PC-9 (cell line): ENCODE measurements at regions of chr5 and their contacts with region 1.

Region 1: DNA sequence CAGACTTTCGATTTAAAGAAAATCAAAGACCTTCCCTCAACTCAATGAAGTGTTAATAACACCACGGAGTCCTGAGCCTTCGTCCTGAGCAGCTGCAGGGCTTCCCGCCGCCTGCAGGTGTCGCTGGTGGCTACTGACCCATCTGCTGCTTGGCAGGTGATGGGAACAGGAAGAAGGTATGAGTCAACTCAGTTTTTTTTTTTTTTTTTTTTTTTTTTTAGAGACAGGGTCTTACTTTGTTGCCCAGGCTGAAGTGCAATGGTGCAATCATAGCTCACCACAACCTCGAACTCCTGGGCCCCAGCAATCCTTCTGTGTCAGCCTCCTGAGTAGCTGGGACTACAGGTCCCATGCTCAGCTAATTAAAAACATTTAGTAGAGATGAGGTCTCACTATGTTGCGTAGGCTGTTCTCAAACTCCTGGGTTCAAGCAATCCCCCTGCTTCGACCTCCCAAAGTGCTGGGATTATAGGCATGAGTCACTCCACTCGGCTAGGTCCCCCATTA is 185.7 kb upstream of the IL12B start:
- DNase-seq: peak; percentile 58 to 76
- H3K4me3 ChIP-seq: no peak overlapping the region
- H3K27ac ChIP-seq: no peak overlapping the region
- H3K4me1 ChIP-seq: peaks cover 45% of the 10 kb centered on the region
- H3K27me3 ChIP-seq: no peaks in the 10 kb centered on the region
- CTCF ChIP-seq: peak; percentile 72

Region 2: GRCh38 chr5:158464383-158464782 is 1051.6 kb before region 1 on chr5:
- CTCF ChIA-PET with region 1: no interaction called
- POLR2A ChIA-PET with region 1: no interaction called
- intact Hi-C with region 1: no loop called
- DNase-seq: no peak
- H3K4me3 ChIP-seq: no peak overlapping the region
- H3K27ac ChIP-seq: no peak overlapping the region
- H3K4me1 ChIP-seq: no peaks in the 10 kb centered on the region
- H3K27me3 ChIP-seq: no peaks in the 10 kb centered on the region
- CTCF ChIP-seq: no peak

Region 3: GRCh38 chr5:159100025-159100781 is 415.8 kb before region 1 on chr5:
- CTCF ChIA-PET with region 1: no interaction called
- POLR2A ChIA-PET with region 1: no interaction called
- intact Hi-C with region 1: no loop called
- DNase-seq: no peak
- H3K4me3 ChIP-seq: no peak overlapping the region
- H3K27ac ChIP-seq: no peak overlapping the region
- H3K4me1 ChIP-seq: no peaks in the 10 kb centered on the region
- H3K27me3 ChIP-seq: peaks cover 30% of the 10 kb centered on the region; the same call in 1 of the 2 replicates
- CTCF ChIP-seq: no peak

Region 4: DNA sequence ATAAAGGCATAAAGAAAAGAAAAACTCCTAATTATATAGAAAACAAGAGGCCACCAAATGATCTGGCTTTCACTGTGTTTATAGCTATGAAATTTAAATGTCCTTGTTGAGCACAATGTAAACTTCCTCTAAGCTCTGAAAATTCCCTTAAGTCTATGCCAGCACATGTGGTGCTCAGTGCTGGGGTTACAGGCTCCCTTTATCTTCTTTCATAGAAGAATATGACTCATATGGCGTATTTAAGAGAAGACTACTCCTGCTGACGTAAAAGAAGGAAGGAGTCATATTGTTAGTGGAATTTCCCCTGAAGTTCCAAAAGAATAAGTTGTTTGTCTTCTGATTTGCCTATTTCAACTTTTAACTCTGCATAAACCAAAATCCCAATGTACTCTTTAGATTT is 337.0 kb before region 1 on chr5:
- CTCF ChIA-PET with region 1: no interaction called
- POLR2A ChIA-PET with region 1: no interaction called
- intact Hi-C with region 1: loop called (anchors 10 kb)
- DNase-seq: peak; percentile 31 to 68
- H3K4me3 ChIP-seq: no peak overlapping the region
- H3K27ac ChIP-seq: peak overlapping the region; percentile 38
- H3K4me1 ChIP-seq: peaks cover 37% of the 10 kb centered on the region
- H3K27me3 ChIP-seq: no peaks in the 10 kb centered on the region
- CTCF ChIP-seq: no peak

Region 5: GRCh38 chr5:159341914-159342313 is 174.0 kb before region 1 on chr5:
- CTCF ChIA-PET with region 1: no interaction called
- POLR2A ChIA-PET with region 1: no interaction called
- intact Hi-C with region 1: loop called (anchors 5 kb)
- DNase-seq: peak; percentile 83 to 88
- H3K4me3 ChIP-seq: no peak overlapping the region
- H3K27ac ChIP-seq: no peak overlapping the region
- H3K4me1 ChIP-seq: peaks cover 37% of the 10 kb centered on the region
- H3K27me3 ChIP-seq: peaks cover 25% of the 10 kb centered on the region
- CTCF ChIP-seq: no peak

Region 6: GRCh38 chr5:159567461-159567860 is 51.5 kb after region 1 on chr5:
- CTCF ChIA-PET with region 1: interaction called, 11 read pairs
- POLR2A ChIA-PET with region 1: interaction called, 4 read pairs
- intact Hi-C with region 1: no loop called
- DNase-seq: no peak
- H3K4me3 ChIP-seq: no peak overlapping the region
- H3K27ac ChIP-seq: no peak overlapping the region
- H3K4me1 ChIP-seq: peaks cover 22% of the 10 kb centered on the region
- H3K27me3 ChIP-seq: no peaks in the 10 kb centered on the region
- CTCF ChIP-seq: no peak

Region 7: GRCh38 chr5:159727167-159727566 is 211.2 kb after region 1 on chr5:
- CTCF ChIA-PET with region 1: no interaction called
- POLR2A ChIA-PET with region 1: no interaction called
- intact Hi-C with region 1: no loop called
- DNase-seq: no peak
- H3K4me3 ChIP-seq: no peak overlapping the region
- H3K27ac ChIP-seq: no peak overlapping the region
- H3K4me1 ChIP-seq: no peaks in the 10 kb centered on the region
- H3K27me3 ChIP-seq: no peaks in the 10 kb centered on the region
- CTCF ChIP-seq: no peak

Region 8: DNA sequence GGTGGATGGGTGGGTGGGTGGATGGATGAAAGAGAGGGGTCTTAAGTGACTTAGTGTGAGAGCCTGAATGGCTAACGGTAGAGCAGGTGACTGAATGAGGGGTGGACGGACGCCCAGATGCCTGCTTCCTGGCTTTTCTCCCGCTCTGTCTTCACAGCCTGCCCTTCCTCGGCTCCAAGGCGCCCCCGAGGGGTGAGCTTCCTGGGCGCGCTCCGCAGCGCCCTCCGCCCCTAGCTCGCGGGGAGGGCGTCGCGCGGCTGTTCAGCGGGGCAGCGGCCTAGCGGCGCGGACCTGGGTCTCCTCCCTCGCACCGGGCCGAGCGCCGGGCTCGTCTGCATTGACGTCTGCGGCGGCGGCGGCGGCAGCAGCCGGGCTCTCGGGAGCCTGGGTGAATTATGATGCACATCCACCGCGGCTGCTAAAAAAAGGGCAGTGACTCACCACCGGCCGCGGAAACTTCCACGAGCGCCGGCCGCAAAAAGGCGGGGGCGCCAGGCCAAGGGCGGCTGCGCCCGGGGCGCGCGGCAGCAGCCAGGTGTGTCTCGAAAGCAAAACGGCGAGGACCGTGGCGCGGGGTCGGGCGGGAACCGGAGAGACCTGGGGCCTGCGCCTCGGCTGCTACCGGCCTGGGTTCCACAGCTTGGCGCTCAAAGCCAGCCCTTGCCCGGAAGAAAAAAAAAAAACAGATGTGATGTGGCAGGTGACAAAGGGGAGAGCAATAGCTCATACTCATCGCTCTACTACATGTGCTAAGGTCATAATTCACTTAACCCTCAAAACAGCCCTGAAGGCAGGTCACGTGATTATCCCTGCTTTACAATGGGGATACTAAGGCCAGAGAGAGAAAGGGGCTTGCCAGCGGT is 257.3 kb after region 1 on chr5:
- CTCF ChIA-PET with region 1: interaction called, 4 read pairs
- POLR2A ChIA-PET with region 1: no interaction called
- intact Hi-C with region 1: loop called (anchors 5 kb)
- DNase-seq: peak; percentile 71 to 83
- H3K4me3 ChIP-seq: peak overlapping the region; percentile 61
- H3K27ac ChIP-seq: peak overlapping the region; percentile 66
- H3K4me1 ChIP-seq: peaks cover 33% of the 10 kb centered on the region
- H3K27me3 ChIP-seq: no peaks in the 10 kb centered on the region
- CTCF ChIP-seq: peak; percentile 38; the same call in 1 of the 2 replicates

Region 9: DNA sequence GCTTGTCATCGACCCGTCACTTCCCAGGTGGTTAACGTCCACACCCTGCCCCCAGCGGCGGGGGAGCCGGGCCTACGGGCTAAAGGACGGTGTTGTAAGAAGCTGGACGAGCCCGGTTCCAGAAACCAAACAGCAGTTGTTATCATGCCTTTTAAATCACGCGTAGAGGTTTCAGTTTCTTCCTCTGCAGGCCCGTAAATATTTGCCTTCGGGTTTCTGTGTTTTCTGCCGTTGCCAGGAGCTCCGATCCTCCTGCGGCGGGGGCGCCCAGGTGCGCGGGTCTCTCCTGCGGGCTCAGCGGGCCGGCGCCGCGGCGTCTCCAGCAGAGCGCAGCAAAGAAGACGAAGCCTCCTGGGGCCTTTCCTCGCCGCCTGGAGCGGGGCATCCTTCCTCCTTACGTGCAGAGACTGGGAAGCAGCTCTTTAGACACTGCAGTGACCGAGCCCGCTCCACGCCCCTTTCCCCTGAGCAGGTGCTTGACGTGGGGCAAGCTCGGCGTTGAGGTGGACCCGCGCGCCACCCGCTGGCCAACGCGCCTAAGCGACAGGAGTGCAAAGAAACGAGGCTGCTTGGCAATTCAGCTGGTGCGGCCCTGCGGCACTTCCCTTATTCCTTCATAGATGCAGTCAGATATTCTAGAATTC is 471.2 kb after region 1 on chr5:
- CTCF ChIA-PET with region 1: interaction called, 8 read pairs
- POLR2A ChIA-PET with region 1: no interaction called
- intact Hi-C with region 1: loop called (anchors 2 kb)
- DNase-seq: peak; percentile 85 to 94
- H3K4me3 ChIP-seq: peak overlapping the region; percentile 65; the same call in 1 of the 2 replicates
- H3K27ac ChIP-seq: peak overlapping the region; percentile 55
- H3K4me1 ChIP-seq: peaks cover 13% of the 10 kb centered on the region
- H3K27me3 ChIP-seq: no peaks in the 10 kb centered on the region
- CTCF ChIP-seq: peak; percentile 90